ENCODE measurements at regions of chr5 and their contacts with region 1.

Region 1: GRCh38 chr5:103224894-103225246 is 33.7 kb upstream of the MACIR start:
- DNase-seq: no peak
- H3K4me3 ChIP-seq: no peak overlapping the region
- H3K27ac ChIP-seq: no peak overlapping the region
- H3K4me1 ChIP-seq: no peaks in the 10 kb centered on the region
- H3K27me3 ChIP-seq: no peaks in the 10 kb centered on the region
- CTCF ChIP-seq: no peak

Region 2: DNA sequence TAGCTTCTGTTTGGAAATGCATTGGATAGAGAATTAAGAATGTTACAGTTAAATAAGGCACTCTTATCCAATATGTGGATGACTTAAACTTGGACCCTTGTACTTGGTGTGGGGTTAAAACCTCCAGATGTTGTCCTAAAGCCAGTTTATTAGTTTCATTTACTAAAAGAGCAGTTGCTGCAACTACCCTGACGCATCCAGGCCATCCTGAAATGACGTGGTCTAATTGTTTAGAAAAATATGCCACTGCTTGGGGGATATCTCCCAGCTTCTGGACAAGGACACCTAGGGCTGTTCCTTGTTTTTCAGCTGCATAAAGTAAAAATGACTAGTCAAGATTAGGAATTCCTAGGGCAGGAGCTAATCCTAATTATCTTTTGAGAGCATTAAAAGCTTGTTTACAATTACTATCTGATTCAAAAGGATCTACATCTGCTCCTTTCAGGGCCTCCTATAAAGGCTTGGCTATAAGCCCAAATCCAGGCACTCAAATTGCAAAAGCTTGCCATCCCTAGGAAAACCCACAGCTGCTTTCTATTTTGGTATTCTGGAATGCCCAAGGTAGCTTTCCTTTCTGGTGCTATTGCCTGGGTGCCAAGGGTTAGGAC is 883.1 kb before region 1 on chr5:
- intact Hi-C with region 1: no loop called
- DNase-seq: no peak
- H3K4me3 ChIP-seq: no peak overlapping the region
- H3K27ac ChIP-seq: no peak overlapping the region
- H3K4me1 ChIP-seq: no peaks in the 10 kb centered on the region
- H3K27me3 ChIP-seq: no peaks in the 10 kb centered on the region
- CTCF ChIP-seq: no peak

Region 3: DNA sequence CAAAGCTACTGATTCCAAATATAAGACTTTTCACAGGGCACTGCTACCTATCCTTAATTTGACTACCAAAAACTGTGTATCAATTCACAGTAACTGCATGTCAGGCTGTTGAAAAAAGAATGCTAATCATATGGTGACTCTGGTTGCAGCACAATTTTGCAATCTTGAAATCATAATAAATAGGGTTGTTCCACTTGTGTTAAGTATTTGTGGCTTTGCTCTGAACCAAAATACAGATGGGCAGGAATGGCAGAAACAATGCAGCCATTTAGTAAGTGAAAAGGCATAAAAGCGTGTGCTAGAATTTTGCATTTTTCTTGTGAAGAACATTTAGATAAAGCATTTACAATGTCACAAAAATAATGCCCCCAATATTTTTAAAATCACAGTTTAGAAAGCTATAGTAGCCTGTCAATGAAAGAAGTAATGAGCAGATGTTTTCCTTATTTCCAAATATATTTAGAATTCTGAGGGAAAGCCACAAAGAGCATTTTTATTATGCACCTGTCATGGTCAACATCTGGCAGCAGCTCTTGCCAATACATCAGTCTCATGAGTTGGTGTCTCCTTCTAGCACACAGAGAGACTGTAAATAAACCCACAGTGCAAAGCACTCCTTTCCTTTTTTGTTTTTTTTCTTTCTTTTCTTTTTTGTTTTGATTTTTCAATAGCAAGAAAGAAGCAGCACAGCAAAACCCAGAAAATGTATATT is 524.6 kb before region 1 on chr5:
- intact Hi-C with region 1: no loop called
- DNase-seq: no peak
- H3K4me3 ChIP-seq: no peak overlapping the region
- H3K27ac ChIP-seq: no peak overlapping the region
- H3K4me1 ChIP-seq: no peaks in the 10 kb centered on the region
- H3K27me3 ChIP-seq: no peaks in the 10 kb centered on the region
- CTCF ChIP-seq: no peak

Region 4: GRCh38 chr5:103480246-103480645 is 255.4 kb after region 1 on chr5:
- intact Hi-C with region 1: loop called (anchors 5 kb)
- DNase-seq: no peak
- H3K4me3 ChIP-seq: no peak overlapping the region
- H3K27ac ChIP-seq: no peak overlapping the region
- H3K4me1 ChIP-seq: no peaks in the 10 kb centered on the region
- H3K27me3 ChIP-seq: no peaks in the 10 kb centered on the region
- CTCF ChIP-seq: no peak